ENCODE measurements at regions of chr14 and their contacts with region 1.

Region 1: GRCh38 chr14:57871459-57872080 is 5.7 kb upstream of the SLC35F4 start:
- DNase-seq: peak in 1 of 2 experiments; percentile 54
- H3K4me3 ChIP-seq: no peak overlapping the region
- H3K27ac ChIP-seq: no peak overlapping the region
- H3K4me1 ChIP-seq: peaks cover 0 to 4% (median 0%) of the 10 kb centered on the region in 4 experiments; a peak in 1 of 7 replicates
- H3K27me3 ChIP-seq: peaks cover 1 to 3% (median 2%) of the 10 kb centered on the region in 4 experiments; a peak in 6 of 7 replicates
- CTCF ChIP-seq: peak; percentile 56 to 90 (median 77)
- EP300 ChIP-seq: no peak
- POLR2A ChIP-seq: no peak
- RAD21 ChIP-seq: peak; percentile 81 to 87

Region 2: DNA sequence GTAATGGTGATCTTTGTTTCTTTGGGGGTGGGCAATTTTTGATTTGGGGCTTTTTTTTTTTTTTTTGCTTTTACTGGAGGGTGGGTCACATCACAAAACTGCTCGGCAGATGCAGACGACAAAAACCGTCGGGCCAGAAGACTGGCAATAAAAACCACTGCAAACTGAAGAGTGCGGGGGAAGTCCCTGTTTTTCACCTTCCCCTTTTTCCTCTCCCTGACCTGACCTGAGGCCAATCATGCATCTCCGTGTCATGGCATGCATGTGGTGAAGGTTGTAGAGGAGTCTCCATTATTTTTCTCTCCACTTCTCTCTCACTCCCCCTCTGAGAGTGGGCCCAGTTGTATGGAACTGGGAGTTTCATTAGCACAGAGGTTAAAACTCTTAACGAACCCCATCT is 545.3 kb before region 1 on chr14:
- CTCF ChIA-PET with region 1: no interaction called
- POLR2A ChIA-PET with region 1: no interaction called
- DNase-seq: no peak
- H3K4me3 ChIP-seq: no peak overlapping the region
- H3K27ac ChIP-seq: no peak overlapping the region
- H3K4me1 ChIP-seq: no peaks in the 10 kb centered on the region
- H3K27me3 ChIP-seq: no peaks in the 10 kb centered on the region
- CTCF ChIP-seq: no peak
- EP300 ChIP-seq: no peak
- POLR2A ChIP-seq: no peak
- RAD21 ChIP-seq: no peak

Region 3: DNA sequence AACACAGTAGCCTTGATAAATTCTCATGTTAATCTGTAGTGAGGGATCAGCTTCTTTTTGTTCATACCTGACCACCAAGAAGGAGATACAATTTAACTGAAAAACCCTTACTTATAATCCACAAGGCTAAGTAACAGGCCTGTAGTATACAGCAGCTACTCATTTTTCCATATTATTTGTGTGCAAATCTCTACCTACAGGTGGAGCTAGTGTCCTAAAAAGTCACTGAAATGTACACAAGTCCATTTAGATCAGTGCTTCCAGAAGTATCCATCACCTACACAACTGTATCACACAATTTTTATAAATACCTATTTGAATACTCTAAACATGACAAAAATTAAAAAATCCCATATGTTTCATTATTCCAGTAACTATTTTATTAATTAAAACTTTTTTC is 178.9 kb before region 1 on chr14:
- CTCF ChIA-PET with region 1: interaction called, 13 read pairs
- POLR2A ChIA-PET with region 1: no interaction called
- DNase-seq: no peak
- H3K4me3 ChIP-seq: no peak overlapping the region
- H3K27ac ChIP-seq: no peak overlapping the region
- H3K4me1 ChIP-seq: peaks cover 0 to 2% (median 0%) of the 10 kb centered on the region in 4 experiments; a peak in 1 of 7 replicates
- H3K27me3 ChIP-seq: no peaks in the 10 kb centered on the region
- CTCF ChIP-seq: peak in 2 of 3 experiments; percentile 43 to 58; a peak in 2 of 4 replicates
- EP300 ChIP-seq: no peak
- POLR2A ChIP-seq: no peak
- RAD21 ChIP-seq: peak; percentile 69 to 73

Region 4: DNA sequence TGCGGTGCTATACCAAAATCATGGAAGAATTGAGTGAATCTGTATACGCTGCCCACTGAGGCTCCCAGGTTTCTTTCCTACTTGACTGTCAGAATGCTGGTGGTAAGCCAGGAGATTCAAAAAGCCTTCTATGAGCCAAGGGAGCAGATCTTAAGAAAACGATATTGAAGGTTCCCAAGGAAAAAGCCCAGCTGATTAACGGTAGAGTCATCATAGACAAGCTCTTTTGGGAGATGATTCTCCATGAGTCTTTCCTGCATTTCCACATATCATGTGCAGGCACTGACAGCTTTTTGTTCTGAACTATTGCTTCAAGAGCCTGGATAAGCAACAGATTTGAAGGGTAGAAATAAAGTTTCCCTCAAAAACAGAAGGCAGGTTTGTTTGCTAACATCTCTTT is 23.2 kb before region 1 on chr14:
- CTCF ChIA-PET with region 1: no interaction called
- POLR2A ChIA-PET with region 1: no interaction called
- DNase-seq: no peak
- H3K4me3 ChIP-seq: no peak overlapping the region
- H3K27ac ChIP-seq: no peak overlapping the region
- H3K4me1 ChIP-seq: no peaks in the 10 kb centered on the region
- H3K27me3 ChIP-seq: no peaks in the 10 kb centered on the region
- CTCF ChIP-seq: no peak
- EP300 ChIP-seq: no peak
- POLR2A ChIP-seq: no peak
- RAD21 ChIP-seq: no peak

Region 5: DNA sequence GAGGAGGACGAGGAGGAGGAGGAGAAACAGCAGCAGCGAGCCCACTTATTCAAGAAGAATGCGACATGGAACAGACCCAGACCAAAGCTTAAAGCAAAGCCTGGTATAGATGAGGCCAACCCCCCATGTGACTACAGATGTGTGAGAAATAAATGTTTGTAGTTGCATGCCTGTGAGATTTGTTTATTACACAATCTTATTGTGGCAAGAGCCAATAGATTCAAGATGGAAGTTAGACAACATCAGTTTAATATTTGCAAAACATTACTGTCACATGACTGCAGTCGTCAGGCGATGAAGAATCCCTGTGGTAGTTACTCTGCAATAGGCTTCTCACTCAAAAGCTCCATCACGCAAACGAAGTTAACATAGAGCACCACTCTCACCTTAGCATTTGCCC is 11.5 kb after region 1 on chr14:
- CTCF ChIA-PET with region 1: interaction called, 28 read pairs
- POLR2A ChIA-PET with region 1: no interaction called
- DNase-seq: no peak
- H3K4me3 ChIP-seq: no peak overlapping the region
- H3K27ac ChIP-seq: no peak overlapping the region
- H3K4me1 ChIP-seq: no peaks in the 10 kb centered on the region
- H3K27me3 ChIP-seq: no peaks in the 10 kb centered on the region
- CTCF ChIP-seq: no peak
- EP300 ChIP-seq: no peak
- POLR2A ChIP-seq: no peak
- RAD21 ChIP-seq: no peak

Region 6: GRCh38 chr14:57898837-57899572 is 27.4 kb after region 1 on chr14:
- CTCF ChIA-PET with region 1: interaction called, 10 read pairs
- POLR2A ChIA-PET with region 1: no interaction called
- DNase-seq: no peak
- H3K4me3 ChIP-seq: no peak overlapping the region
- H3K27ac ChIP-seq: no peak overlapping the region
- H3K4me1 ChIP-seq: no peaks in the 10 kb centered on the region
- H3K27me3 ChIP-seq: no peaks in the 10 kb centered on the region
- CTCF ChIP-seq: no peak
- EP300 ChIP-seq: no peak
- POLR2A ChIP-seq: no peak
- RAD21 ChIP-seq: no peak

Region 7: GRCh38 chr14:57918791-57919190 is 47.2 kb after region 1 on chr14:
- CTCF ChIA-PET with region 1: no interaction called
- POLR2A ChIA-PET with region 1: no interaction called
- DNase-seq: no peak
- H3K4me3 ChIP-seq: no peak overlapping the region
- H3K27ac ChIP-seq: no peak overlapping the region
- H3K4me1 ChIP-seq: no peaks in the 10 kb centered on the region
- H3K27me3 ChIP-seq: no peaks in the 10 kb centered on the region
- CTCF ChIP-seq: no peak
- EP300 ChIP-seq: no peak
- POLR2A ChIP-seq: no peak
- RAD21 ChIP-seq: no peak

Region 8: GRCh38 chr14:57943038-57943437 is 71.5 kb after region 1 on chr14:
- CTCF ChIA-PET with region 1: no interaction called
- POLR2A ChIA-PET with region 1: no interaction called
- DNase-seq: no peak
- H3K4me3 ChIP-seq: no peak overlapping the region
- H3K27ac ChIP-seq: no peak overlapping the region
- H3K4me1 ChIP-seq: peaks cover 3 to 16% (median 9%) of the 10 kb centered on the region in 4 experiments; a peak in 5 of 7 replicates
- H3K27me3 ChIP-seq: no peaks in the 10 kb centered on the region
- CTCF ChIP-seq: no peak
- EP300 ChIP-seq: no peak
- POLR2A ChIP-seq: no peak
- RAD21 ChIP-seq: no peak

Region 9: DNA sequence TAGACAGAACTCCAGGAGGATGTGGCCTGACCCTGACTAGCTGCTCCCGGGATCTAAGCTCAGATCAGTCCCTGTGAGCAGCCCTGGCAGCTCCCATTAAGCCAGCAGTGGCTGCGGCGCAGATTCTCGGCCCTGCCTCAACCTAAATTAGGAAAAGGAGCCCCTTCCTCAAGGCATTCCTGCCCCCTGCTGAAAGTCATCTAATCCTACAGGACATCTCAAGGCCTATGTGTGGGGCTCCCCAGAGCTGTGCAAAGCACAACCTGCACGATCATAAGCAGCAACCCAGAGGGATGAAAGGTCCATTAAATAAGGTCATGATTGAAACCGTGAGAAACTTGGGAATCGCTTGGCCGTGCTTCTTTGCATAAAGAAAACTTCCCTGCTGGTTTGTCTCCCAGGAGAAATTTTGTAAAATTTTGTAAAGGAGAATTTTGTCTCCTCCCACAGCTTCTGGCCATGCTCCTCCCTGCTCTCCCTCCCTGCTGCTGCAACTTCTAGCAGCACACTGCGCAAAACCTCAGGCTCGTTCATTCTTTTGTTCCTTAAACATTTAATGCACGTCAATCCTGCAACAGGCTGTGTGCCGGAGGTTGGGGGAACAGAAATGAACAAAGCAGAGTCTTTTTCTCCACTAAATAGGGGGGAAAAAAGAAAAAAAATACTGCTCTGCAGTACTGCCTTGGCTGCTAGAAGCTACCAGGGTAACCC is 90.9 kb after region 1 on chr14:
- CTCF ChIA-PET with region 1: interaction called, 17 read pairs
- POLR2A ChIA-PET with region 1: no interaction called
- DNase-seq: peak; percentile 66 to 72
- H3K4me3 ChIP-seq: no peak overlapping the region
- H3K27ac ChIP-seq: no peak overlapping the region
- H3K4me1 ChIP-seq: peaks cover 0 to 6% (median 2%) of the 10 kb centered on the region in 4 experiments; a peak in 3 of 7 replicates
- H3K27me3 ChIP-seq: no peaks in the 10 kb centered on the region
- CTCF ChIP-seq: peak; percentile 37 to 78 (median 76)
- EP300 ChIP-seq: no peak
- POLR2A ChIP-seq: no peak
- RAD21 ChIP-seq: peak; percentile 90 to 91

Region 10: GRCh38 chr14:58072288-58073071 is 200.9 kb after region 1 on chr14:
- CTCF ChIA-PET with region 1: interaction called, 12 read pairs
- POLR2A ChIA-PET with region 1: no interaction called
- DNase-seq: peak in 1 of 2 experiments; percentile 65
- H3K4me3 ChIP-seq: no peak overlapping the region
- H3K27ac ChIP-seq: no peak overlapping the region
- H3K4me1 ChIP-seq: no peaks in the 10 kb centered on the region
- H3K27me3 ChIP-seq: no peaks in the 10 kb centered on the region
- CTCF ChIP-seq: peak; percentile 14 to 76 (median 73)
- EP300 ChIP-seq: no peak
- POLR2A ChIP-seq: no peak
- RAD21 ChIP-seq: peak; percentile 86